GM12878 (cell line): ENCODE measurements at regions of chr6 and their contacts with region 1.

Region 1: DNA sequence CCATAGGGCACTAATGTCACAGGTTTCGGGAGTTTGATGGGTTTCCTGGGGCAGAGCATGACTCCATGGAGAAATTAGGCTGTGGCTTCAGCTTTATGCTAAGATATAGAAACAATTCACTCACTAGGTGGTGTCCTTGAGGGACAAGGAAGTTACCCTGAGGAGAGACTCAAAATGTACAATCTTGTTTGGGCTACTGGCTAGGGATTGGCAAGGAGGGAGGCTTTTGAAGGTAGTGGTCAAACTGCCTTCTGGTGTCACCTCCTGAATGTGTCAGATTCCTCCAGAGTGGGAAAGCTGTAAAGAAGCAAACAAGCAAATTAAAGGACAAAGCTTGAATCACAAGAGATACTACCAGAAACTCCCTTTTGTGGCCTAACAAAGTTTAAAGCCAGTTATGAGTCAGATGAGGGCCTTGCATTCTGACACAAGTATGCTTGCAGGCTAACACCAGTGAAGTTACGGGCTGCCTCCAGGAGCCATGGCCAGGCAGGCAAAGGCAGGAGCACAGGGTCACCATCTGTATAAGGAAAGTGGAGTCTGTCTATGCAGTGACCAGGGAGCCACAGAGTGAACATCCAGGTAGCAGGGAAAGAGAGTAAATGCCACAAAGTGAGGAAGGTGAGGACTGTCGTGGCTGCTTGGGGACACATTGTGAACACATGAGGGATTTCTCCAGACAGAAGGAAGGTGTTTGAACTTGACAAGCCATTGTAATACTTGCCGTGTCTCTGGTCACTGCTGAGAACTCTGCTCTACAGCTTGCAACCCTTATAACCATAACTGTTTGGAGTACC is 107.7 kb upstream of the DTNBP1 start:
- DNase-seq: peak; percentile 62
- ATAC-seq: peak; percentile 88
- H3K4me3 ChIP-seq: no peak overlapping the region
- H3K27ac ChIP-seq: peak overlapping the region; percentile 38
- H3K4me1 ChIP-seq: peaks cover 7% of the 10 kb centered on the region
- H3K27me3 ChIP-seq: no peaks in the 10 kb centered on the region
- CTCF ChIP-seq: peak; percentile 24 to 32 (median 30); a peak in 5 of 6 replicates
- EP300 ChIP-seq: peak; percentile 32 to 76; a peak in 2 of 4 replicates
- POLR2A ChIP-seq: no peak
- RAD21 ChIP-seq: peak; percentile 44

Region 2: GRCh38 chr6:15735567-15736265 is 34.8 kb before region 1 on chr6:
- CTCF ChIA-PET with region 1: interaction called, 3 read pairs
- POLR2A ChIA-PET with region 1: interaction called, 6 read pairs
- RAD21 ChIA-PET with region 1: interaction called, 18 read pairs
- SMC1A ChIA-PET with region 1: interaction called, 39 read pairs
- in situ Hi-C with region 1: no loop called
- intact Hi-C with region 1: no loop called
- DNase-seq: no peak
- ATAC-seq: peak; percentile 74
- H3K4me3 ChIP-seq: no peak overlapping the region
- H3K27ac ChIP-seq: no peak overlapping the region
- H3K4me1 ChIP-seq: peaks cover 4% of the 10 kb centered on the region; the same call in 1 of the 2 replicates
- H3K27me3 ChIP-seq: no peaks in the 10 kb centered on the region
- CTCF ChIP-seq: no peak
- EP300 ChIP-seq: peak; percentile 60 to 74; a peak in 3 of 4 replicates
- POLR2A ChIP-seq: no peak
- RAD21 ChIP-seq: no peak

Region 3: DNA sequence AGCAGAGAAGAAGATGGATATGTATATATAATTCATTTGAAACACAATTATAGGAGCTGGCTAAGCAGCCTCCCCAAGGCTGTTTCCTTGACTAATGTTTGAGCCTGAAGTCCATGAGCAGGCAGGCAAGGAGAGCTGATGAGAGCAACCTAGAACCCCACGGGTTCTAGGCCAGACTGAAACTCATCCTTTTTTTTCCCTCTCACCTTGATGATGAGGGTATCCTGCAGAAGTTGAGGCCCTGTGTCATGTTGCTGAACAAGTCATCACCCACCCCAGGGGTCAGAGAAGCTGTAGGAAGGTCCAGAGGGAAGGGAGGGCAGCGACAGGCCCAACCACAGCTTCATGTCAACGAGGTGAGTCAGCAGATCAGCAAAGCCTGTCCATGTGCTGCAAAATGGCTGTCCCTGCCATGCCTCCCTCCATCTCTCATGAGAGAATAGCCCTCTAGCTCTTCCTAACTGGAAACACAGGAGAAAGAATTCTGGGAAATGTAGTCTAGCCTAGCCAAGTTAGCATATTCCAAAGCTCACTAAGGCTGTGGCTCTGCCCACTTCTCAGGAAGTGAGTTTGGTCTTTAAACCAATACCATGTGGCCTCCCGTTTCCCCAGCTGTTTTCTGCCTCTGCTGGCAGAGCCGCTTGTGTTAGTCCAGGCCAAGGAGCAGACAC is 16.4 kb before region 1 on chr6:
- CTCF ChIA-PET with region 1: interaction called, 5 read pairs
- POLR2A ChIA-PET with region 1: interaction called, 4 read pairs
- RAD21 ChIA-PET with region 1: interaction called, 10 read pairs
- SMC1A ChIA-PET with region 1: interaction called, 14 read pairs
- in situ Hi-C with region 1: no loop called
- intact Hi-C with region 1: no loop called
- DNase-seq: no peak
- ATAC-seq: no peak
- H3K4me3 ChIP-seq: no peak overlapping the region
- H3K27ac ChIP-seq: no peak overlapping the region
- H3K4me1 ChIP-seq: no peaks in the 10 kb centered on the region
- H3K27me3 ChIP-seq: no peaks in the 10 kb centered on the region
- CTCF ChIP-seq: no peak
- EP300 ChIP-seq: no peak
- POLR2A ChIP-seq: no peak
- RAD21 ChIP-seq: no peak

Region 4: DNA sequence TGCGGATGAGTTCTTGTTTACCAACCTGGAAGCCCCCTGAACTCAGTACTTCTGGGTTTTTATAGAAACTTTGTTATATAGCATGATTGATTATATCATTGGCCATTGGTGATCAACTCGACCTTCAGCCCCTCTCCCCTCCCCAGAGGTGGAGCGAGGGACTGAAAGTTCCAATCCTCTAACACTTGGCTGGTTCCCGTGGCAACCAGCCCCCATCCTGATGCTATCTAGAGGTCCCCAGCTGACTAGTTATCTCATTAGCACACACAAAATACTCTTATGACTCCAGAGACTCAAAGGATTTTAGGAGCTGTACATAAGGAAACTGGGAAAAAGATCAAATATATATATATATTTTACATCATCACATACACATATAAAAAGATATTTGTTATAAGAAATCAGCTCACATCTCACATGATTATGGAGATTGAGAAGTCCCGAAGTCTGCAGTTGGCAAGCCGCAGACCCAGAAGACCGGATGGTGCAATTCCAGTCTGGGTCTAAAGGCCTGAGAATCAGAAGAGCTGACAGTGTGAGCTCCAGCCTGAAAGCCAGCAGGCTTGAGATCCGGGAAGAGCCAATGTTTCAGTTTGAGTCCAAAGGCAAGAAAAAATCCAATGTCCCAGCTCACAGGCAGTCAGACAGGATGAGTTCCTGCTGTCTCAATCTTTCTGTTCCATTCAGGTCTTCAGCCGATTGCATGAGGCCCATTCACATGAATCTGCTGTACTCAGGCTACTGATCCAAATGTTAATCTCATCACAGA is 71.6 kb after region 1 on chr6:
- CTCF ChIA-PET with region 1: interaction called, 8 read pairs
- POLR2A ChIA-PET with region 1: no interaction called
- RAD21 ChIA-PET with region 1: interaction called, 11 read pairs
- SMC1A ChIA-PET with region 1: interaction called, 5 read pairs
- in situ Hi-C with region 1: no loop called
- intact Hi-C with region 1: no loop called
- DNase-seq: no peak
- ATAC-seq: no peak
- H3K4me3 ChIP-seq: no peak overlapping the region
- H3K27ac ChIP-seq: no peak overlapping the region
- H3K4me1 ChIP-seq: peaks cover 5% of the 10 kb centered on the region; the same call in 1 of the 2 replicates
- H3K27me3 ChIP-seq: no peaks in the 10 kb centered on the region
- CTCF ChIP-seq: no peak
- EP300 ChIP-seq: no peak
- POLR2A ChIP-seq: no peak
- RAD21 ChIP-seq: no peak

Region 5: GRCh38 chr6:15879382-15880261 is 109.1 kb after region 1 on chr6:
- CTCF ChIA-PET with region 1: interaction called, 10 read pairs
- POLR2A ChIA-PET with region 1: interaction called, 15 read pairs
- RAD21 ChIA-PET with region 1: interaction called, 55 read pairs
- SMC1A ChIA-PET with region 1: interaction called, 36 read pairs
- in situ Hi-C with region 1: no loop called
- intact Hi-C with region 1: loop called (anchors 5 kb)
- DNase-seq: no peak
- ATAC-seq: peak; percentile 81
- H3K4me3 ChIP-seq: no peak overlapping the region
- H3K27ac ChIP-seq: peak overlapping the region; percentile 61
- H3K4me1 ChIP-seq: peaks cover 18% of the 10 kb centered on the region
- H3K27me3 ChIP-seq: no peaks in the 10 kb centered on the region
- CTCF ChIP-seq: no peak
- EP300 ChIP-seq: 0 out of 4 replicates have a peak, but pooled peaks of 1 of the 2 experiments have one; percentile 25
- POLR2A ChIP-seq: no peak
- RAD21 ChIP-seq: no peak

Region 6: GRCh38 chr6:15962449-15962764 is 191.9 kb after region 1 on chr6:
- CTCF ChIA-PET with region 1: no interaction called
- POLR2A ChIA-PET with region 1: interaction called, 4 read pairs
- RAD21 ChIA-PET with region 1: interaction called, 4 read pairs
- SMC1A ChIA-PET with region 1: no interaction called
- in situ Hi-C with region 1: no loop called
- intact Hi-C with region 1: loop called (anchors 10 kb)
- DNase-seq: no peak
- ATAC-seq: peak; percentile 78
- H3K4me3 ChIP-seq: no peak overlapping the region
- H3K27ac ChIP-seq: peak overlapping the region; percentile 45
- H3K4me1 ChIP-seq: peaks cover 26% of the 10 kb centered on the region; the same call in 1 of the 2 replicates
- H3K27me3 ChIP-seq: no peaks in the 10 kb centered on the region
- CTCF ChIP-seq: no peak
- EP300 ChIP-seq: peak; percentile 12 to 48; a peak in 2 of 4 replicates
- POLR2A ChIP-seq: no peak
- RAD21 ChIP-seq: no peak

Region 7: GRCh38 chr6:16345437-16346330 is 575.1 kb after region 1 on chr6:
- CTCF ChIA-PET with region 1: no interaction called
- POLR2A ChIA-PET with region 1: no interaction called
- RAD21 ChIA-PET with region 1: no interaction called
- SMC1A ChIA-PET with region 1: no interaction called
- in situ Hi-C with region 1: no loop called
- intact Hi-C with region 1: no loop called
- DNase-seq: no peak
- ATAC-seq: no peak
- H3K4me3 ChIP-seq: no peak overlapping the region
- H3K27ac ChIP-seq: no peak overlapping the region
- H3K4me1 ChIP-seq: no peaks in the 10 kb centered on the region
- H3K27me3 ChIP-seq: no peaks in the 10 kb centered on the region
- CTCF ChIP-seq: no peak
- EP300 ChIP-seq: no peak
- POLR2A ChIP-seq: no peak
- RAD21 ChIP-seq: no peak